ENCODE measurements at regions of chr11 and their contacts with region 1.

Region 1: DNA sequence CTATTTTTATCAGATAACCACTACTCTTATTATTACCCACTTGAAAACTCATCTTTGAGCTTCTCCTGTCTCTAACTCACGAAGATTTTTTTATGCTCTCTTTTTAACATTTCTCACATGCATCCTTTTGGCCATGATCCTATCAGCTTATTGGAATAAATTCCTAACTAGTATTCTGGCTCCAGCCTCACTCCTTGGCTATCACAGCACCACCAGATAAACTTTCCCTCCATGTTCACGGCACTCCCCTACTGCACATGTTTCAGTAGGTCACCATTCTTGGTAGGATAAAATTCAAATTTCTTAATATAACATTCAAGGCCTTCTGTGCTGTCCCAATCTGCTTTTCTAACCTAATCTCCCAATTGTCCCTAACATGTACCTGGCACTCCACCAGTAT is 186.6 kb upstream of the UBASH3B start:
- DNase-seq: no peak
- H3K4me3 ChIP-seq: no peak overlapping the region
- H3K27ac ChIP-seq: no peak overlapping the region
- H3K4me1 ChIP-seq: no peaks in the 10 kb centered on the region
- H3K27me3 ChIP-seq: no peaks in the 10 kb centered on the region
- CTCF ChIP-seq: no peak
- POLR2A ChIP-seq: no peak

Region 2: GRCh38 chr11:122398167-122398566 is 70.8 kb before region 1 on chr11:
- intact Hi-C with region 1: no loop called
- DNase-seq: no peak
- H3K4me3 ChIP-seq: no peak overlapping the region
- H3K27ac ChIP-seq: no peak overlapping the region
- H3K4me1 ChIP-seq: no peaks in the 10 kb centered on the region
- H3K27me3 ChIP-seq: no peaks in the 10 kb centered on the region
- CTCF ChIP-seq: no peak
- POLR2A ChIP-seq: no peak

Region 3: GRCh38 chr11:122486793-122487495 is 18.0 kb after region 1 on chr11:
- intact Hi-C with region 1: loop called (anchors 2 kb)
- DNase-seq: no peak
- H3K4me3 ChIP-seq: no peak overlapping the region
- H3K27ac ChIP-seq: no peak overlapping the region
- H3K4me1 ChIP-seq: no peaks in the 10 kb centered on the region
- H3K27me3 ChIP-seq: no peaks in the 10 kb centered on the region
- CTCF ChIP-seq: no peak
- POLR2A ChIP-seq: no peak